Activated CD8-positive, alpha-beta T cell treated with anti-CD3 and anti-CD28 coated beads, Interleukin-2, amount 10 ng/mL, durations not matched to agents 7 days and 5 days (primary cell): ENCODE measurements at regions of chr14 and their contacts with region 1.

Region 1: GRCh38 chr14:25132732-25133422 is 82.9 kb upstream of the STXBP6 start:
- DNase-seq: peak; percentile 63
- ATAC-seq: peak; percentile 90
- H3K4me3 Mint-ChIP-seq: no peak overlapping the region
- H3K27ac Mint-ChIP-seq: no peak overlapping the region
- H3K4me1 Mint-ChIP-seq: no peaks in the 10 kb centered on the region
- H3K27me3 Mint-ChIP-seq: peaks cover 15% of the 10 kb centered on the region

Region 2: DNA sequence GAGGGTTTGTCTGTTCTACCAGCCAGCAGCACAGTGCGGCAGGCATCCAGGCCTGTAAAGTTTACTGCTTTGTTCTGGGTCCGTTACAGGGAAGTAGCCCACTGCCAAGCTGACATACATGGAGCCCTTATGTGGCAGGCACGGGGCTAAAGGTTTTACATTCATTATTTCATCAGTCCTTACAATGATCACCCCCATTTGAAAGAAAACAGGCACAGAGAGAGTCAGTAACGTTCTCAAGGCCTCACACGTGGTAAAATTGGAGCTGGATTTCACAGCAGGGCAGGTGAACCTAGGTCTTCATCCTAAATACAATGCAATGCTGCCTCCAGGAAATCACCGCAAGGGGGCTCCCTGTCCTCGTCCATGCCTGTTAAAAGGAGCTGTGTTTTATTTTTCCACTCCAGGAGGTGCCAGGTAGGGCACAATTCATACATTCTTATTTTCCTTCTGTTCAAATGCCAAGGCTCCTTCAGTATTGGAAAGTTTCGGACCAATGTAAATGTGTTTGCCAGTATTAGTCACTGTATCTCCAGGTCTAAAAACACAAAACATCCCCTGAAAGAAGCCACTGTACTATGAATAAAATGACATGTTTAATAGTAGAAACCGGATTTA is 326.7 kb before region 1 on chr14:
- CTCF ChIA-PET with region 1: interaction called, 11 read pairs
- POLR2A ChIA-PET with region 1: no interaction called
- DNase-seq: peak; percentile 61
- ATAC-seq: peak; percentile 51
- H3K4me3 Mint-ChIP-seq: no peak overlapping the region
- H3K27ac Mint-ChIP-seq: no peak overlapping the region
- H3K4me1 Mint-ChIP-seq: no peaks in the 10 kb centered on the region
- H3K27me3 Mint-ChIP-seq: peaks cover 15% of the 10 kb centered on the region